Sciatic nerve (tissue), 2 donors: ENCODE measurements at regions of chr14 and their contacts with region 1.

Region 1: GRCh38 chr14:60561845-60562746 is 53.1 kb downstream of the SIX6 start:
- DNase-seq: peak; percentile 73
- ATAC-seq: peak; percentile 92

Region 2: DNA sequence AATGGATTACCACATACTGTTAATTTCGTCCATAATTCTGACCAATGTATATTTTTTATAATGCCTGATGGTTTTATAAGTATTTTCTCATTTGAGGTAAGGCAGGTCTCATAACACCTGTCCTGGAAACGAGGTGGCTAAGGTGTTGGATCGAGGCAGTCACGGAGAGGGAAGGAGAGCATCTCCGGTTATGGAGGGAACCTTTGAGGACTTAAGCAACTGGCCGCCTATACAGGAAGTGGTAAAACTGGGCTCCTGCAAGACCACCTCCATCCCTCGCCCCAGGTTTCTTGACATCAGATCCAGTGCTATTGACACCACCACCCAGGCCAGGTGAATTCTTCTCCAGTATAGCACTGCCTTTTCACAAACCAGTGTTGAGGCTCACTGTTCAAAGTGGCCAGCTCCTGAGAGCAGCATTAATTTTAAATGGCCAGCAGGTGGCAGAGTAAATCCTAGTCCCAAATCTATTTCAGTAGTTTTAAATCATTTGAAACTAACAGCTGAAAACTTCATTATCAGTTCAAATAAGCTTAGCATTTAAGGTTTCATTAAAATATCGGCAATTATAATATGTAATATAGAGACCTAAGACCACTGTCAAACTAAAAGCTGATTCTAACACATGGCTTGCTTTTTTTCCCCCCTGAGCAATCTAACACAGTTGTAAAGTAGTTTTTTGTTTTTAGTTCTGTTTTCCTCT is 212.3 kb before region 1 on chr14:
- intact Hi-C with region 1: loop called (anchors 2 kb)
- DNase-seq: no peak
- ATAC-seq: peak; percentile 86